ENCODE measurements at regions of chr4 and their contacts with region 1.

Region 1: DNA sequence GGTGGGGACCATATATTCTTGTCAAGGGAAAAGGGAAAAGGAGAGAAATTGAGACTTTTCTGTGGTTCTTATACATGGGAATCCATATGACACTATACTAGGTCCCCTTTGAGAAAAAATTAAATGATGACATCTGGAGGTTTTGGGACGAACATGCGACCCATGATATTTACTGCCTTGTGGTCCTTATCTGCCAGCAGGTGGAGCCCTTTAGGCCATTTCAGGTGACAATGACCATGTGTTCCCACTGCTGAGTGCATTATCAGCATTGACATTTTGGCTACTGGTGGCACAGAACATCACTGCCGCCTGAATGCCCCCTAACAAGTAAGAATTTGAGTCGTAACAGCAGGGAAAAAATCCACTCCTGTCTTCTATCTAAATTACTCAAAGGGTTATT is 843.4 kb downstream of the FSTL5 start:
- DNase-seq: peak; percentile 19
- H3K4me3 Mint-ChIP-seq: no peak overlapping the region
- H3K27ac Mint-ChIP-seq: no peak overlapping the region
- H3K4me1 Mint-ChIP-seq: no peaks in the 10 kb centered on the region
- H3K27me3 Mint-ChIP-seq: no peaks in the 10 kb centered on the region
- CTCF ChIP-seq: peak; percentile 26

Region 2: GRCh38 chr4:161382655-161383054 is 62.3 kb after region 1 on chr4:
- CTCF ChIA-PET with region 1: no interaction called
- intact Hi-C with region 1: no loop called
- DNase-seq: no peak
- H3K4me3 Mint-ChIP-seq: no peak overlapping the region
- H3K27ac Mint-ChIP-seq: no peak overlapping the region
- H3K4me1 Mint-ChIP-seq: no peaks in the 10 kb centered on the region
- H3K27me3 Mint-ChIP-seq: no peaks in the 10 kb centered on the region
- CTCF ChIP-seq: no peak

Region 3: DNA sequence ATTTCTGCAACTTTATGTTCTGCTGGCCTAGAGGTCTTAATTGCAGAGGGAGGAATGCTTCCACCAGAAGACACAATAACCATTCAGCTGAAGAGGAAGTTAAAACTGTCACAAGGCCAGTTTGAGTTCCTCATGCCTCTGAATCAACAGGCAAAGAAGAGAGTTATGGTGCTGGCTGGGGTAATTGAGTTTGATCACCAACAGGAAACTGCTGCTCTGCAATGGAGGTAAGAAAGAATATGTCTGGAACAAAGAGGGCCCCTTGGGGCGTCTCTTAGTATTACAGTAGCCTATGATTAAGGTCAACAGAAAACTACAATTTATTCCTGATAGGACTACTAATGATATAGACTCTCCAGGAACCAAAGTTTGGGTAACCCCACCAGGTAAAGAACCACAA is 99.4 kb after region 1 on chr4:
- CTCF ChIA-PET with region 1: no interaction called
- intact Hi-C with region 1: loop called (anchors 5 kb)
- DNase-seq: peak; percentile 37
- H3K4me3 Mint-ChIP-seq: no peak overlapping the region
- H3K27ac Mint-ChIP-seq: no peak overlapping the region
- H3K4me1 Mint-ChIP-seq: no peaks in the 10 kb centered on the region
- H3K27me3 Mint-ChIP-seq: no peaks in the 10 kb centered on the region
- CTCF ChIP-seq: no peak

Measured in Calu3 (cell line).